T-cell (primary cell): ENCODE measurements at regions of chr10 and their contacts with region 1.

Region 1: DNA sequence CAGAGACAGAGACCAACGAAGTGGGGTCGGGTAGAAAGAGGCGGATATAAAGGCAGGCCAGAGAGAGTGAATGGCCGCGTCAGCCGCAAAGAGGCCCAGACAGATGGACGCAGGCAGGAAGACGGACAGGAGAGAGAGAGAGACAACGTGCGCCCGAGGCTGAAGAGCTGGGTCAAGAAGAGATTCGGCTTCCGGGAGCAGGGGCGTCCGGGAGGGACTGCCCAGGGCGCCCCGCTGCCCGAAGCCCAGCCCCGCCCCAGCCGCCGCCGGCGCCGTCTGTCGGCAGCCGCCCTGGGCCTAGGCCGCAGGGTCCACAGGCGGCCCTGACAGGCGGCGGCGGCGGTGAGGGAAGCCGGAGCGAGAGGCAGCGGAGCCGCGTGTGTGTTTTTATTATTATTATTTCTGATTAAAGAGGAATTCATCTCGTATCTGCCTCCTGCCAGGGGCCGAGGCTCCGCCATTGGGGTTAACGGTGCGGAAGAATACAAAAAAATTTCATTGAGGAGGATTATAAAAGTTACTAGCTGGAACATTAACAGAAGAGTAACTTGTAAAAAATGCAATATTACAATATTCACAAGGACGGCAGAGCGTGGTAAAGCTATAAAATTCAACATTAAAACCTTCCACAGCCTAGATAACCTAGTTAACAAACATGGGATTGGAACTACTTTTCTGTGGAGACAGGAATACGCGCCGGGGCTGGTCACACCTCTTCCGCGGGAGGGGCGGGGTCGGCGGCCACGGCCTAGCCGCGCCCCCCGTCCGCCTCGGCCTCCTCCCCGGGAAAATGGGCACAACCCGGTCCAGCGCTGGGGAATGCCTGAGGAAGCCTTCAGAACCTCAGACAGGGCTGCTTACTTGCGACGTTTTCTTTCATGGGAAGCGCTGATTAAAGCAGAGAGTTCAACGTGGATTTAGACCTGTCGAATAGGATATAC is 29.7 kb upstream of the PAX2 start:
- DNase-seq: no peak
- ATAC-seq: no peak
- H3K4me3 ChIP-seq: peak overlapping the region in 1 of 2 donors; percentile 6
- H3K4me3 Mint-ChIP-seq: peak overlapping the region in 2 of 3 donors; percentile 50 to 70
- H3K27ac ChIP-seq: no peak overlapping the region
- H3K27ac Mint-ChIP-seq: no peak overlapping the region
- H3K4me1 ChIP-seq: peaks cover 0 to 3% of the 10 kb centered on the region in 2 experiments
- H3K4me1 Mint-ChIP-seq: peaks cover 13 to 18% (median 16%) of the 10 kb centered on the region in 3 donors
- H3K27me3 ChIP-seq: peaks cover 24 to 59% of the 10 kb centered on the region in 2 experiments
- H3K27me3 Mint-ChIP-seq: peaks cover 86 to 87% of the 10 kb centered on the region in 2 donors

Region 2: DNA sequence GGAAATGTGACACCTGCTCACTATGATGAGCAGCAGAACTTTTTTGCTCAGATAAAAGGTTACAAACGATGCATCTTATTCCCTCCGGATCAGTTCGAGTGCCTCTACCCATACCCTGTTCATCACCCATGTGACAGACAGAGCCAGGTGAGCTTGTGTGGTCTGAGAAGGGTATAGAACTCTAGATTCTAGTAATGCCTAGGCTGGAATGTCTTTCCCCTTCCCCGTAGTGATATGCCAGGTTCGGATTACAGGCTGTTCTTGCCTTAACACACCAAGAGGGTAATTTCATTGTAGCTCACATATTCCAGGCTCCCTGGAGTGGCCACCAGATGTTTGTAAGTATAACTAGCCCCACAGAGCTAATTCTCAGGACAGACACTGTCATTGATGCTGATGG is 170.8 kb before region 1 on chr10:
- CTCF ChIA-PET with region 1: interaction called in 1 of 2 experiments, 11 read pairs
- POLR2A ChIA-PET with region 1: no interaction called
- DNase-seq: no peak
- ATAC-seq: no peak
- H3K4me3 ChIP-seq: no peak overlapping the region
- H3K4me3 Mint-ChIP-seq: no peak overlapping the region
- H3K27ac ChIP-seq: no peak overlapping the region
- H3K27ac Mint-ChIP-seq: no peak overlapping the region
- H3K4me1 ChIP-seq: no peaks in the 10 kb centered on the region
- H3K4me1 Mint-ChIP-seq: peaks cover 3 to 6% (median 6%) of the 10 kb centered on the region in 3 donors
- H3K27me3 ChIP-seq: no peaks in the 10 kb centered on the region
- H3K27me3 Mint-ChIP-seq: no peaks in the 10 kb centered on the region

Region 3: DNA sequence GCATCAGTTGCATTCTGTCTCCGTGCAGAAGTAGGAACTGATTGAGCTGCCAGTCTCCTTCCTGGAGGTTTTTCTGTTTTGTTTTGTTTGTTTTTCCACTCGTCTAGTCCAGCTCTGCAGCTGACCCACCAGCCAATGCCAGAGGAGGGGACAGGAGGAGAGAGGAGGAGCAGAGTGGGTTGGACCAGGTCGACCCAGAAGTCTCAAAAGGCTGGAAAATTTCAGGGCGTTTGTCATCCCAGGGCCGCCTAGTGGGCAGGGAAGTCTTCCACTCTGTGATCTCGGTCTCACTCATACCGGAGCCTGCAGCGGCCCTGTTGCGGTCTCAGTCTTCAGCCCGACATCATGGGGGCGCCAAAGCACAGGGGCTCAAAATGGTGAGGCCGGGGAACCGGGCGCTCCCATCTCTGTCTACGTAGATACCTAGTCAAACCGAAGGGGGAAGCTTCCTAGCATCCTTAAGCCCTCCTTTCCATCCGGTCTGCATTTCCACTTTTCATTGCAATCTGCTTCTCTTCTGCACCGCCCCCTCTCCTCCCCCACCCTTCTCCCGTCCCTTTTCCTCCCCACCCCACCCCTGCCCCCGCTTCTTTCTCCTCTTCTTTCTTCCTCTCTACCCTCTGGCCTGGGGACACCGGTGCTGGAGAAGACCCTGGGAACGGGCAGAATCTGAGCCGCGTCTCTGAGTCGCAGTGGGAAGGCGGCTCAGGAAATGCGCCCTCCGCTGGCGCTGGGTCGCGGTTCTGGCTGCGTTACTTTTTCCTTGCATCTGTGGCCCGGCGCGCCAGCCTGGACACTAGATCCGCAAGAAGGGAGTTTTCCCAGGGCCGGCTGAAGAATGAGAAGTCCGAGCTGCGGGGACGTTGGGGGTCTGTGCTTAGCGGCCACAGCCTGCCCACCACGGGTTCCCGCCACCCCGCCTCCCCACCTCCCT is 13.5 kb after region 1 on chr10:
- CTCF ChIA-PET with region 1: no interaction called
- POLR2A ChIA-PET with region 1: no interaction called
- DNase-seq: peak in 3 of 35 experiments; percentile 12 to 33 (median 22)
- ATAC-seq: peak; percentile 35 to 62 (median 45)
- H3K4me3 ChIP-seq: no peak overlapping the region
- H3K4me3 Mint-ChIP-seq: peak overlapping the region; percentile 28 to 84 (median 58)
- H3K27ac ChIP-seq: no peak overlapping the region
- H3K27ac Mint-ChIP-seq: no peak overlapping the region
- H3K4me1 ChIP-seq: peaks cover 2 to 31% of the 10 kb centered on the region in 2 experiments
- H3K4me1 Mint-ChIP-seq: peaks cover 27 to 37% (median 33%) of the 10 kb centered on the region in 3 donors
- H3K27me3 ChIP-seq: peaks cover 24 to 77% of the 10 kb centered on the region in 2 experiments
- H3K27me3 Mint-ChIP-seq: peaks cover 78 to 88% of the 10 kb centered on the region in 2 donors